A549 (cell line): ENCODE measurements at regions of chr1 and their contacts with region 1.

Region 1: DNA sequence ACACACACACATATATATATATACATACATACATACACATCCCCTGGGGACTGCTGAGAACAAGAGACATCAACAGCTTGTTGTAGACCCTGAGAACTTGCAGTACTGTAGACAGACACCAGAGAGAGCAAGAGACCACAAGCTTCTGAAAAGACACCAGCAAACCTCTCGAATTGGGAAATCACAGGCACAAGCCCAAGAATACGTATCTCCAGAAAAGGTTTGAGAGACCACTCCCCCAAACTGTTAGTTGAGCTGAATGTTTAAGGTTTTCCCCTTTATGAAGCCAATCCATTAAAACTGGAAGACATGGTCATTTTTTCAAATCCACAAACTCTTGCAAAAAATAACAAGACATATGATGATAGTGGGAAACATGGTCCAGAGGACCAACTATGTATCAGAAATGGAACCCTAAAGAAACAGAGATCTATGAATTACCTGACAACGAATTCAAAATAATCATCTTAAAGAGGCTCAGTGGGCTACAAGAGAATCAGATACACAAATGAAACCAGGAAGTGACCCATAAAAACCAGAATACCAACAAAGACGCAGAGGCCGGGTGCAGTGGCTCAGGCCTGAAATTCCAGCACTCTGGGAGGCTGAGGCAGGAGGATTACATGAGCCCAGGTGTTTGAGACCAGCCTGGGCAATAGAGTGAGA is 45.1 kb downstream of the SLC2A1 start:
- DNase-seq: peak; percentile 48 to 80
- ATAC-seq: peak; percentile 56 to 84; a peak in 5 of 6 replicates
- H3K4me3 ChIP-seq: no peak overlapping the region
- H3K27ac ChIP-seq: no peak overlapping the region
- H3K4me1 ChIP-seq: no peaks in the 10 kb centered on the region
- CTCF ChIP-seq: peak; percentile 62
- EP300 ChIP-seq: no peak
- POLR2A ChIP-seq: no peak
- RAD21 ChIP-seq: peak; percentile 85 to 91

Region 2: DNA sequence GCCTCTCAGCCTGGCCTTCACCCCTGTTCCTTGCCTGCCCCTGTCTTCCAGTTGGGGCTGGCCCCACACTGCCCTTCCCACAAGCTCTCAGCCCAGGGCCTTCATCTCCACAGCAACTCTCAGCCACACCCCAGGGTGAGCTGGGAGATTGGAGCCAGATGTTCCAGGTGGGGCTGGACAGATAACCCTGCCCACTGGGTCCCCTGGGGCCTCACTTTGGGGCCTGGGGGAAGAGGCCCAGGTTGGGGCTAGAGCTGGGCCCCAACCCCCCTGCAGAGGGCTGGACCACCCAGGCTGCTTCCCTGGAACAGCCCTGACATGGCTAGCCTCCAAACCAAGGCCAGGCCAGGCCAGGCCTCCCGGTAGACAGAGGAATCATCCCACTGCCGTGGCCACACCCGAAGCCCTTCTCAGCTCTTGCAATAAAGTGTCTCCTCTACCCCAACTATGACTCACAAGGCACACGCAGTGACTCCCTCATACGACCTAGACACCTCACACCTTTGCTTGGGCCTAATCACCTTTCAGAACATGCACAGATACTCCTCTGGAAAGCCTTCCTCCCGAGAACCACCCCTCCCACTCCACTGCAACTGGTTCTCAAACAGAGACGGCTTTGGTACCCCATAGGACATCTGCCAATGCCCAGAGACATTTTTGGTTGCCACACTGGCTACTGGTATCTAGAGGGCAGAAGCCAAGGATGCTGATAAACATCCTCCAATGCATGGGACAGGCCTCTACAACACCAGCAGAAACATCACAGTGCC is 22.9 kb after region 1 on chr1:
- CTCF ChIA-PET with region 1: interaction called, 10 read pairs
- POLR2A ChIA-PET with region 1: no interaction called
- DNase-seq: peak in 1 of 2 experiments; percentile 92
- ATAC-seq: peak; percentile 64 to 69
- H3K4me3 ChIP-seq: 0 out of 3 replicates have a peak overlapping the region, but pooled peaks have one; percentile 13
- H3K27ac ChIP-seq: peak overlapping the region; percentile 91 to 99
- H3K4me1 ChIP-seq: peaks cover 100% of the 10 kb centered on the region
- CTCF ChIP-seq: no peak
- EP300 ChIP-seq: peak; percentile 86 to 87; a peak in 4 of 5 replicates
- POLR2A ChIP-seq: no peak
- RAD21 ChIP-seq: peak in 1 of 2 experiments; percentile 51; a peak in 2 of 5 replicates

Region 3: DNA sequence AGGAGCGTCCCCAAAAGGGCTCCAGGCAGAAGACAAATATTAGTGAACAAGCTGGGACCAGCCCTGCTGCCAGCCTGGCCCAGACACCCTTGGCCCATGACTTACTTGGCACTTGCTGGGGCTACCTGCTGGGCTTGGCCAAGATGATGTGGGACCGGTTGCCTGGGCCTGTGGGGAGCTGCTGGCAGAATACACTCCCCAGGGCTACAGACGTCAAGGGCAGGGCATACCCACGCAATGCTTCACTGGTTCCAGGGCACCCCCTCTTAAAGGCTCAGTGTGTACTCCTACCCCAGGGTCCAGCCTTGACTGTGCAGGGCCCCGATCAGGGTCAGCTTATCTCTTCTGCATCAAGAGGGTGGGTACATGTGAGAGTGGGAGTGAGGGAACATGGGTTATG is 151.6 kb after region 1 on chr1:
- CTCF ChIA-PET with region 1: interaction called, 280 read pairs
- POLR2A ChIA-PET with region 1: no interaction called
- DNase-seq: no peak
- ATAC-seq: no peak
- H3K4me3 ChIP-seq: no peak overlapping the region
- H3K27ac ChIP-seq: no peak overlapping the region
- H3K4me1 ChIP-seq: 0 out of 3 replicates have a peak, but pooled peaks cover 3% of the 10 kb centered on the region
- CTCF ChIP-seq: no peak
- EP300 ChIP-seq: no peak
- POLR2A ChIP-seq: no peak
- RAD21 ChIP-seq: no peak